ENCODE measurements at regions of chr3 and their contacts with region 1.

Region 1: GRCh38 chr3:160941885-160942494 is 163.2 kb downstream of the B3GALNT1 start:
- DNase-seq: peak; percentile 82
- ATAC-seq: peak; percentile 66
- H3K4me3 Mint-ChIP-seq: no peak overlapping the region
- H3K27ac Mint-ChIP-seq: no peak overlapping the region
- H3K4me1 Mint-ChIP-seq: peaks cover 2% of the 10 kb centered on the region
- H3K27me3 Mint-ChIP-seq: no peaks in the 10 kb centered on the region

Region 2: GRCh38 chr3:160686955-160687535 is 254.9 kb before region 1 on chr3:
- CTCF ChIA-PET with region 1: interaction called, 4 read pairs
- POLR2A ChIA-PET with region 1: interaction called, 3 read pairs
- intact Hi-C with region 1: loop called (anchors 1 kb)
- DNase-seq: no peak
- ATAC-seq: no peak
- H3K4me3 Mint-ChIP-seq: no peak overlapping the region
- H3K27ac Mint-ChIP-seq: no peak overlapping the region
- H3K4me1 Mint-ChIP-seq: no peaks in the 10 kb centered on the region
- H3K27me3 Mint-ChIP-seq: peaks cover 2% of the 10 kb centered on the region

Region 3: DNA sequence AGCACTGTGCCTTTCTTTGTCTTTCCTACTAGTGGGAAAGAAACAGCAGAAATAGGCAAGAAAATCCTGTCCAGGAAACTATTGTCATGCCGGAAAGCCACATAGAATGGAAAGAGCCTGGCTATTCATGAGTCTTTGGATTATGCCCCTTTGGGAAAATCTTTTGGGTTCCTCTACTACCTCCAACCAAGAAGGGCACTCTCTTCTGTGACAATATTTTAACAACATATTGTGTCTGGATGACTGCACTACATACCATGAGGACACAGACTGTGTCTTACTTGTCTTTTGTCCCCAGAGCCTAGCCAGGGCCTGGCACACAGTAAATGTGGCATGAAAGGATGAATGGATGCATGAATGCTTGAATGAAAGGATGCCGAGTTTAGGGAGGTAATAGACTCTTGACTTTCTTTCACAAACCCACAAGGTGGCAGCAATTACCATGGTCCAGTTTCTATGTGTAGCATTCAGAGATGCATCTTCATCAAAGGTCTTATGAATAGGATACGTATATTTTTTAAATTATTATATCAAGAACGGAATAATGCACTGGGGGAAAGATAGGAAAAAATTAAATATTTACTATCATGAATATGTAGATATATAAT is 234.7 kb before region 1 on chr3:
- CTCF ChIA-PET with region 1: interaction called, 47 read pairs
- POLR2A ChIA-PET with region 1: no interaction called
- intact Hi-C with region 1: loop called (anchors 1 kb)
- DNase-seq: peak; percentile 44
- ATAC-seq: peak; percentile 60
- H3K4me3 Mint-ChIP-seq: no peak overlapping the region
- H3K27ac Mint-ChIP-seq: no peak overlapping the region
- H3K4me1 Mint-ChIP-seq: no peaks in the 10 kb centered on the region
- H3K27me3 Mint-ChIP-seq: peaks cover 21% of the 10 kb centered on the region

Region 4: GRCh38 chr3:160893207-160893606 is 48.8 kb before region 1 on chr3:
- CTCF ChIA-PET with region 1: no interaction called
- POLR2A ChIA-PET with region 1: no interaction called
- intact Hi-C with region 1: no loop called
- DNase-seq: no peak
- ATAC-seq: no peak
- H3K4me3 Mint-ChIP-seq: no peak overlapping the region
- H3K27ac Mint-ChIP-seq: no peak overlapping the region
- H3K4me1 Mint-ChIP-seq: no peaks in the 10 kb centered on the region
- H3K27me3 Mint-ChIP-seq: no peaks in the 10 kb centered on the region

Region 5: GRCh38 chr3:160929595-160929994 is 12.4 kb before region 1 on chr3:
- CTCF ChIA-PET with region 1: interaction called, 18 read pairs
- POLR2A ChIA-PET with region 1: no interaction called
- intact Hi-C with region 1: no loop called
- DNase-seq: no peak
- ATAC-seq: no peak
- H3K4me3 Mint-ChIP-seq: no peak overlapping the region
- H3K27ac Mint-ChIP-seq: no peak overlapping the region
- H3K4me1 Mint-ChIP-seq: no peaks in the 10 kb centered on the region
- H3K27me3 Mint-ChIP-seq: peaks cover 2% of the 10 kb centered on the region

Region 6: DNA sequence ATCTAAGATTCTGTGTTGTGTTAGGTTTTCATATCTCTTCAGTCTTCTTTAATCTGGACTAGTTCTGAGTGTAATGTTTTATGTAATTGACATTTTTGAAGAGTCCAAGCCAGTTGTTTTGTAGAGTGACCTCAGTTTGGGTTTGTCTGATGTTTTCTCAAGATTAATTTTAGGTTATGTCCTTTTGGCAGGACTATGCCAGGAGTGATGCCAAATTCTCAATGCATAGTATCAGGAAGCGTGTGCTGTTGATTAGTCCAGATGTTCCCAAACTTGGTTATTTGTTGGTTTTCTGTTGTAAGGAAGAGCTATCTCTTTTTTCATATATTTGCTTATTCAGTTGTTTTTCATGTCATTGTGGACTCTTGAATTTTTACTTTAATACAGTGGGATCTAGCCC is 311.7 kb after region 1 on chr3:
- CTCF ChIA-PET with region 1: no interaction called
- POLR2A ChIA-PET with region 1: no interaction called
- intact Hi-C with region 1: no loop called
- DNase-seq: no peak
- ATAC-seq: no peak
- H3K4me3 Mint-ChIP-seq: no peak overlapping the region
- H3K27ac Mint-ChIP-seq: no peak overlapping the region
- H3K4me1 Mint-ChIP-seq: no peaks in the 10 kb centered on the region
- H3K27me3 Mint-ChIP-seq: no peaks in the 10 kb centered on the region

Measured in activated CD4-positive, alpha-beta T cell treated with anti-CD3 and anti-CD28 coated beads for 36 hours (primary cell).